Left ventricle myocardium inferior (tissue), 1 donor: ENCODE measurements at regions of chr15 and their contacts with region 1.

Region 1: DNA sequence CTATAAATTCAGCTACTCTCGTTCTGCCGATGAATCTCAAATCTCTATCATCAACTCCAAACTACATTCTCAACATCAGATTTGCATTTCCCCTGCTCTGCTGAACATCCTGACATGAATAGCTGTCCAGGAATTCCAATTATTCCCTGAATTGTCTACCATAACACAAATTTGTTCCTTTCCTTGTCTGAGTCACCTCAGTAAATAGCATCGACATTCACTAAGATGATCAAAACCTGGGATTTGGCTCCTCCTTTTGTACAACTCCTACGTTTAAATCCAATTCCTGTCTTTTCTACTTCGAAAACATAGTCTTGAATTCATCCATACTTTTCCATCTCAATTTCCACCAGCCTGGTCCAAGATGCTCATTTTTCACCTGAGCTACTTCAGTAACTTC is 107.0 kb downstream of the GREM1 start:
- DNase-seq: no peak
- H3K4me3 ChIP-seq: no peak overlapping the region
- H3K27ac ChIP-seq: no peak overlapping the region
- H3K4me1 ChIP-seq: no peaks in the 10 kb centered on the region
- H3K27me3 ChIP-seq: peaks cover 13% of the 10 kb centered on the region
- CTCF ChIP-seq: no peak

Region 2: DNA sequence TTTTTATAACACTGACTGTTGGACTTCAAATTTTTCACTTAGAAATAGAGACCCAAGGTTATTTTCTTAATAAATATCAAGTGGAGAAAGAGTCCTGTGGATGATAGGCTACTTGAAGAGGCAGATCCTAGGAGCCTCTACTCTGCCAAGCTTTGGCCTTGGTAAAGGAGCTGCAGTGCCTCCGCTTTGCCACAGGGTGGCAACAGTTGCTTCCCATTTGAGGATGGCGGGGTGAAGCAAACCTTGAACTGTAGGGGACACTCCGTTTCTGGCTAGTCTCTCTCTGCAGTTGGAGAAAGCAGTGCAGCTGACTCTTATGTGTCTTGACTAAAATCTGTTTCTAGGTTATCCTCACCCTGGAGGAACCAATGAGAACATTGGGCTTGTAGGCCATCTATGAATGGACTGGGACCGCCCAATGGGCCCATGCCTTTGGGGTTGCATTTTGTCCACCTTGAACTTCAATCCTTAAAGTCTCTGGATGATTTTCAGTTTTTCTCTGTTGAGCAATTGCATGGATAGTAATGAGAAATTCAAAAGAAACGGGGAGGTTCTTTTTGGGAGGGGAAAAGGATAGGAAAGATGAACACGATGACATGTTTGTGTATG is 173.4 kb before region 1 on chr15:
- intact Hi-C with region 1: no loop called
- DNase-seq: no peak
- H3K4me3 ChIP-seq: no peak overlapping the region
- H3K27ac ChIP-seq: no peak overlapping the region
- H3K4me1 ChIP-seq: no peaks in the 10 kb centered on the region
- H3K27me3 ChIP-seq: no peaks in the 10 kb centered on the region
- CTCF ChIP-seq: peak; percentile 81

Region 3: GRCh38 chr15:32774022-32774421 is 50.8 kb before region 1 on chr15:
- intact Hi-C with region 1: loop called (anchors 5 kb)
- DNase-seq: no peak
- H3K4me3 ChIP-seq: no peak overlapping the region
- H3K27ac ChIP-seq: no peak overlapping the region
- H3K4me1 ChIP-seq: no peaks in the 10 kb centered on the region
- H3K27me3 ChIP-seq: no peaks in the 10 kb centered on the region
- CTCF ChIP-seq: no peak

Region 4: DNA sequence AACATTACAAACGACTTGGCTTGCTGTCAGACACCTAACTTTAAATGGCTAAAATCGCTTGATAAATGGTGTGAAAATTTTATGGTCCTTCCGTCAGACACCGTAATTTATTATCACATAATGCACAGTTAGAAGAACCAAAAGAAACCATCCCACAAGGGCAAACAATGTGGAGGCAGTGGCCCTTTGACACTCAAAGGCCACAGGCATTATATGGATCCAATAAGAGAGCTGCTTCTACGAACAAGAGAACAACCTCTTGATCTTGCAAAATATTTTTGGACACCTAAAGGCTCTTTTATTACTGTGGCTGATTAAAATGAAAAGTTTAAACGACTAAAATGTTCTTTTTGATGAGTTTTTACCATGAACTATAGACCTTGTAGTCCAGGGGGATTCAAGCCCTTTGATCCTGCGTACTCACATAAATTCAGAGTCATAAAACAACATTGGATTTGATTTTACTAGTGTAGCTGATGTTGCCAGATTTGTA is 166.9 kb after region 1 on chr15:
- intact Hi-C with region 1: no loop called
- DNase-seq: no peak
- H3K4me3 ChIP-seq: no peak overlapping the region
- H3K27ac ChIP-seq: no peak overlapping the region
- H3K4me1 ChIP-seq: no peaks in the 10 kb centered on the region
- H3K27me3 ChIP-seq: no peaks in the 10 kb centered on the region
- CTCF ChIP-seq: no peak

Region 5: GRCh38 chr15:33114374-33114717 is 289.6 kb after region 1 on chr15:
- intact Hi-C with region 1: no loop called
- DNase-seq: no peak
- H3K4me3 ChIP-seq: no peak overlapping the region
- H3K27ac ChIP-seq: no peak overlapping the region
- H3K4me1 ChIP-seq: peaks cover 5% of the 10 kb centered on the region
- H3K27me3 ChIP-seq: no peaks in the 10 kb centered on the region
- CTCF ChIP-seq: no peak